Activated naive CD4-positive, alpha-beta T cell treated with anti-CD3 and anti-CD28 coated beads, Interleukin-2, amount 10 ng/mL, durations not matched to agents 7 days and 5 days (primary cell): ENCODE measurements at regions of chr1 and their contacts with region 1.

Region 1: GRCh38 chr1:66342707-66343106 is 191.2 kb upstream of the SGIP1 start:
- DNase-seq: no peak
- H3K4me3 Mint-ChIP-seq: no peak overlapping the region
- H3K27ac Mint-ChIP-seq: no peak overlapping the region
- H3K4me1 Mint-ChIP-seq: peaks cover 84% of the 10 kb centered on the region
- H3K27me3 Mint-ChIP-seq: no peaks in the 10 kb centered on the region

Region 2: DNA sequence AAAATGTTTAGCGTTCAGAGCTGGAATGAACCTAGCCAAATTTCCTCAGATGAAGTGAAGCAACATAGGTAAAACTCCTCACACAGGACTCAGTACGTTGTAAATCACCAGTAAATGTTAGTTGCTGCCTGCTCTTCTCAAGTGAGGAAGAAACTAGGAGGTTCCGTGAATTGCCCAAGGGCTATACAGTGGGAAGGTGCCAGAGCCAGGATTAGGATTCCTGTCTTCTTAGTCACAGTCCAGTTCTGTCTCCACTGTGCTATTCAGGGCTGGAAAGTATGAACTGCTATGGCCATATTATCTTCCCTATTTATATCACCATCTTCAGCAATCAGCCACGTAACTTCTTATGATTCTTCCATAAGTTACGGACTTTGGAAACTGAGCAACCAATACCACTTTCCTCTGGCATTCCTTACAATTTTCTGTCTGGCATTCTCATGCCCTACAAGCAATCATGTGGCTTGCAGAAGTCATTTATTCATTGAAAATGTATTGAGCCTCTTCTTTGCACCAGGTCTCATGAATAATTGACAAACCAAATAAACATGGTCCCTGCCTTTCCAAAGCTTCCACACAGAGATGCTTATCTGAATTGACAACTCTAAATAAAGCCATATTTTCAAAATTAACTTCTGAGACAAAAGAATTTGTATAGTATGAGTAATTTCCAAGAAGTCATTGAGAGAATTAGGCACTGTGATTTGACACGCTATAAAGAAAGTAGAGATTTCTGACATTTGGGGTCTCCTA is 80.3 kb before region 1 on chr1:
- CTCF ChIA-PET with region 1: interaction called, 13 read pairs
- DNase-seq: no peak
- H3K4me3 Mint-ChIP-seq: no peak overlapping the region
- H3K27ac Mint-ChIP-seq: no peak overlapping the region
- H3K4me1 Mint-ChIP-seq: peaks cover 70% of the 10 kb centered on the region
- H3K27me3 Mint-ChIP-seq: no peaks in the 10 kb centered on the region

Region 3: DNA sequence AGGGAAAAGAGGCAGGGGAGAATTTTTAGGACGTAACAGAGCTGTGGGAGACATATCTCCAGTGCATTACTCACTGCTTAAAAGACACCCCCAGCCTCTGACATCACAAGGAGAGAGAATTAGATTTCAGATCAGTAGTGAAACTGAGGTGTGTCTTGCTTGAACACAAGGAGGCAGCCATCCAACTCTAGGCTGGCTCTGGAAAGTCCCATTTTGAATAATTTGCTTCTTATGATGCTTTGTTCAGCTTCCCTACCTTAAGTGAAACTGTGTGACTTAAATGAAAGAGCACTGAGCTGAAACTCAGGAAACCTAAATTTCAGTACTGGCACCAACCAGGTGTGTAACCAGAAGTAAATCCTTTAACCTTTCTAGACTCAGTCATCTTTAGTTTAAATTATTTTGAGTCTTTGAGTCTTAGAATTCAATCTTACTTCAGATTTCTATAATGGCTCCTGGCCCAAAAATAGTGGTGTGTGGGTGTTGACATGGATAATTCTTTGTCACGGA is 60.3 kb before region 1 on chr1:
- CTCF ChIA-PET with region 1: interaction called, 11 read pairs
- DNase-seq: peak; percentile 77
- H3K4me3 Mint-ChIP-seq: no peak overlapping the region
- H3K27ac Mint-ChIP-seq: peak overlapping the region; percentile 90
- H3K4me1 Mint-ChIP-seq: peaks cover 92% of the 10 kb centered on the region
- H3K27me3 Mint-ChIP-seq: no peaks in the 10 kb centered on the region

Region 4: DNA sequence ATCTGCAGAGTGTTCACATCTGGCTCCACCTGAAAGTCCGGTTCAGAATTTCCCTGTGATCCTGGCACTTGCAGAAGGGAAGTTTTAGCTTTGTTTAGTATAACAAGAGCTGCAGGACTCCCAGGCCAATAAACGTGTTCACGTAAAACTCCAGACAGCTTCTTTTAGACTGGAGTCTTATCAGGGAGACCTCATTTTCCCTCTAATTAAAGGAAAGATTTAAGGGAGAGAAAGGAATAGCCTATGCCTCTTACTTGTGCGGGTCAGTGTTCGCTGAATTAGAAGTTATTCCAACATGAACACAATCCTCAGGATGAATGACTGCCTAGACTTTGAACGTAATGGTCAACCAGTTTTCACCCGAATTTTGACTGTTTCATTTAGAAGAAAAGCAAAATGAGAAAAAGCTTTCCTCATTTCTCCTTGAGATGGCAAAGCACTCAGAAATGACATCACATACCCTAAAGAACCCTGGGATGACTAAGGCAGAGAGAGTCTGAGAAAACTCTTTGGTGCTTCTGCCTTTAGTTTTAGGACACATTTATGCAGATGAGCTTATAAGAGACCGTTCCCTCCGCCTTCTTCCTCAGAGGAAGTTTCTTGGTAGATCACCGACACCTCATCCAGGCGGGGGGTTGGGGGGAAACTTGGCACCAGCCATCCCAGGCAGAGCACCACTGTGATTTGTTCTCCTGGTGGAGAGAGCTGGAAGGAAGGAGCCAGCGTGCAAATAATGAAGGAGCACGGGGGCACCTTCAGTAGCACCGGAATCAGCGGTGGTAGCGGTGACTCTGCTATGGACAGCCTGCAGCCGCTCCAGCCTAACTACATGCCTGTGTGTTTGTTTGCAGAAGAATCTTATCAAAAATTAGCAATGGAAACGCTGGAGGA is 10.8 kb before region 1 on chr1:
- CTCF ChIA-PET with region 1: interaction called, 13 read pairs
- DNase-seq: peak; percentile 63
- H3K4me3 Mint-ChIP-seq: peak overlapping the region; percentile 98
- H3K27ac Mint-ChIP-seq: peak overlapping the region; percentile 98
- H3K4me1 Mint-ChIP-seq: peaks cover 48% of the 10 kb centered on the region
- H3K27me3 Mint-ChIP-seq: no peaks in the 10 kb centered on the region

Region 5: DNA sequence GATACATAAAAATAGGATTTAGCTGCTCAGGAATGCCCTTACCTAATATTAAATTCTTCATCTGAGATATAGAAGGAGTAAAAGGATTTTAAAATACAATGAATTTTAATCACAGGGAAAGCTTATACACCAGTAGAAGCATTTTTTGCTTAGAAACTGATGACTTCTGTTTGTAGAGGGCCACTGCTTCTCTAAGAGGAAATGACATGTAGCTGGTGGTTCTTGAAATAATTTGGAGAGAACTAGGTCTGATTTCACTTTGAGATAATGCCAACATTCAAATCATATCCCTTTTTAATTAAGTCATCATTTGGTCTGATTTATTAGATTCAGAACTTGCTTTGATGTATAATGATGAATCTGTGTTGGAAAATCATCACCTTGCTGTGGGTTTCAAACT is 24.7 kb after region 1 on chr1:
- CTCF ChIA-PET with region 1: interaction called, 10 read pairs
- DNase-seq: no peak
- H3K4me3 Mint-ChIP-seq: no peak overlapping the region
- H3K27ac Mint-ChIP-seq: peak overlapping the region; percentile 15
- H3K4me1 Mint-ChIP-seq: peaks cover 70% of the 10 kb centered on the region
- H3K27me3 Mint-ChIP-seq: no peaks in the 10 kb centered on the region